GM12878 (cell line): ENCODE measurements at regions of chr1 and their contacts with region 1.

Region 1: GRCh38 chr1:200628223-200628881 is 7.8 kb upstream of the KIF14 start:
- DNase-seq: peak; percentile 89
- ATAC-seq: peak; percentile 82
- H3K4me3 ChIP-seq: peak overlapping the region; percentile 61
- H3K27ac ChIP-seq: peak overlapping the region; percentile 96
- H3K4me1 ChIP-seq: peaks cover 37% of the 10 kb centered on the region
- H3K27me3 ChIP-seq: no peaks in the 10 kb centered on the region
- CTCF ChIP-seq: no peak
- EP300 ChIP-seq: peak; percentile 54 to 55; a peak in 2 of 4 replicates
- POLR2A ChIP-seq: no peak
- RAD21 ChIP-seq: no peak

Region 2: GRCh38 chr1:200654660-200655059 is 26.3 kb after region 1 on chr1:
- CTCF ChIA-PET with region 1: interaction called, 3 read pairs
- POLR2A ChIA-PET with region 1: interaction called, 6 read pairs
- RAD21 ChIA-PET with region 1: interaction called, 12 read pairs
- SMC1A ChIA-PET with region 1: interaction called, 5 read pairs
- in situ Hi-C with region 1: no loop called
- intact Hi-C with region 1: loop called (anchors 1 kb)
- DNase-seq: no peak
- ATAC-seq: peak; percentile 97
- H3K4me3 ChIP-seq: peak overlapping the region; percentile 33; the same call in 1 of the 2 replicates
- H3K27ac ChIP-seq: peak overlapping the region; percentile 63
- H3K4me1 ChIP-seq: peaks cover 37% of the 10 kb centered on the region
- H3K27me3 ChIP-seq: no peaks in the 10 kb centered on the region
- CTCF ChIP-seq: no peak
- EP300 ChIP-seq: peak; percentile 54 to 92; a peak in 3 of 4 replicates
- POLR2A ChIP-seq: no peak
- RAD21 ChIP-seq: peak; percentile 13; the same call in 1 of the 2 replicates

Region 3: GRCh38 chr1:200774735-200775444 is 146.5 kb after region 1 on chr1:
- CTCF ChIA-PET with region 1: interaction called, 45 read pairs
- POLR2A ChIA-PET with region 1: interaction called, 4 read pairs
- RAD21 ChIA-PET with region 1: interaction called, 8 read pairs
- SMC1A ChIA-PET with region 1: interaction called, 14 read pairs
- in situ Hi-C with region 1: no loop called
- intact Hi-C with region 1: no loop called
- DNase-seq: no peak
- ATAC-seq: peak; percentile 86
- H3K4me3 ChIP-seq: peak overlapping the region; percentile 29; the same call in 1 of the 2 replicates
- H3K27ac ChIP-seq: peak overlapping the region; percentile 74
- H3K4me1 ChIP-seq: peaks cover 24% of the 10 kb centered on the region
- H3K27me3 ChIP-seq: no peaks in the 10 kb centered on the region
- CTCF ChIP-seq: no peak
- EP300 ChIP-seq: peak in 1 of 2 experiments; percentile 37; a peak in 1 of 4 replicates
- POLR2A ChIP-seq: no peak
- RAD21 ChIP-seq: no peak

Region 4: GRCh38 chr1:200837931-200838571 is 209.7 kb after region 1 on chr1:
- CTCF ChIA-PET with region 1: interaction called, 75 read pairs
- POLR2A ChIA-PET with region 1: interaction called, 3 read pairs
- RAD21 ChIA-PET with region 1: interaction called, 41 read pairs
- SMC1A ChIA-PET with region 1: interaction called, 36 read pairs
- in situ Hi-C with region 1: no loop called
- intact Hi-C with region 1: no loop called
- DNase-seq: no peak
- ATAC-seq: 0 out of 3 replicates have a peak, but pooled peaks have one; percentile 42
- H3K4me3 ChIP-seq: no peak overlapping the region
- H3K27ac ChIP-seq: no peak overlapping the region
- H3K4me1 ChIP-seq: no peaks in the 10 kb centered on the region
- H3K27me3 ChIP-seq: no peaks in the 10 kb centered on the region
- CTCF ChIP-seq: peak in 1 of 3 experiments; percentile 2; a peak in 2 of 6 replicates
- EP300 ChIP-seq: no peak
- POLR2A ChIP-seq: no peak
- RAD21 ChIP-seq: peak; percentile 28; the same call in 1 of the 2 replicates

Region 5: GRCh38 chr1:200907611-200908097 is 279.3 kb after region 1 on chr1:
- CTCF ChIA-PET with region 1: no interaction called
- POLR2A ChIA-PET with region 1: interaction called, 10 read pairs
- RAD21 ChIA-PET with region 1: no interaction called
- SMC1A ChIA-PET with region 1: interaction called, 4 read pairs
- in situ Hi-C with region 1: no loop called
- intact Hi-C with region 1: loop called (anchors 5 kb)
- DNase-seq: peak; percentile 67
- ATAC-seq: peak; percentile 74
- H3K4me3 ChIP-seq: no peak overlapping the region
- H3K27ac ChIP-seq: no peak overlapping the region
- H3K4me1 ChIP-seq: peaks cover 15% of the 10 kb centered on the region
- H3K27me3 ChIP-seq: no peaks in the 10 kb centered on the region
- CTCF ChIP-seq: peak in 1 of 3 experiments; percentile 26; a peak in 1 of 6 replicates
- EP300 ChIP-seq: peak; percentile 44 to 60; a peak in 2 of 4 replicates
- POLR2A ChIP-seq: no peak
- RAD21 ChIP-seq: peak; percentile 46